Naive thymus-derived CD4-positive, alpha-beta T cell (primary cell): ENCODE measurements at regions of chr11 and their contacts with region 1.

Region 1: DNA sequence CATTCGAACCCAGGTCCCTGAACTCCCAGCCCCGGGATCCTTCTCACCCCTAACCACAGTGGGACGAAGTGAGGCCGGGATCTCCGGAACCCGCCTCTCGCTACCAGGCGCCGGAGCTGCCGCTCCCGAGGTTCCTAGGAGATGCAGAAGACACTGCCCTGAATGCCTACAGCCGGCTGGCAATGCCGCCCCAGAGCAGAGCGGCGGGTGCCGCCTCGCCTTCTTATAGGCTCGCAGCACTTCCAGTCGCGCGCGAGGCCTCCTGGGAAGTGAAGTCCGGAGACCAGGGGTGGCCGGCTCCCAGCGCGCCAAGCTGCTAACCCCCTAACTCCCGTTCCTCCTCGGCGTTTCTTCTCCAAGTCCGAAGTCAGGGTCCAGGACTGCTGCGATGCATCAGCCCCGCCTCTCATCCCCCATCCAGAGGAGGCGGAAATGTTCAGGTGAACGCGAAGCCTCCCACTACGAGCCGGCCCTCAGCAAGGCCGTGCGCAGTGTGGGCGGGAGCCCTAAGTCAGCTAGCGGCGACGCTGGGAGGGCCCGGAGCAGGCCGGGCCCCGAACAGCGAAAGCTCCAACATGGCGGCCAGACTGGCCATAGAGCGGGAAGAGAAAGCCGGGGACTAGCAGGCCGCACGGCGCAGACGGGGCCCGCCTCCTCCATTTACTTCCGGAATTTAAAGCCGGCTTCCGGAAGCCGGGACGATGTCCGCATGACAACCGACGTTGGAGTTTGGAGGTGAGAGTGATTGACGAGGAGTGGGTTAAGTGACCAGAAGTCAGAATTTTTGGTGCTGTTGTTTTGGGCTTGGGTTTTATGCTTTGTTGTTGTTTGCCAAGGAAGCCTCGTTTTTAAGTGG is at the starts of genes CYB561A3 and TMEM138:
- DNase-seq: peak; percentile 69 to 90 (median 81)
- ATAC-seq: peak; percentile 93
- H3K4me3 ChIP-seq: peak within 1 kb of the TSS; percentile 97
- H3K4me3 Mint-ChIP-seq: peak within 1 kb of the TSS; percentile 94 to 99 (median 98)
- H3K27ac ChIP-seq: peak within 1 kb of the TSS; percentile 95
- H3K27ac Mint-ChIP-seq: peak within 1 kb of the TSS; percentile 97 to 100 (median 99)
- H3K4me1 ChIP-seq: peaks cover 14 to 19% of the 10 kb centered on the region in 2 donors
- H3K4me1 Mint-ChIP-seq: peaks cover 30 to 55% (median 40%) of the 10 kb centered on the region in 7 donors
- H3K27me3 ChIP-seq: no peaks in the 10 kb centered on the region
- H3K27me3 Mint-ChIP-seq: no peaks in the 10 kb centered on the region
- total RNA-seq, gene CYB561A3: 37.9 to 47.6 (median 44.2) TPM
- total RNA-seq, gene TMEM138: 54.6 to 65.1 (median 59.9) TPM

Region 2: GRCh38 chr11:60906132-60906972 is 455.6 kb before region 1 on chr11 and contains the start of gene PRPF19:
- CTCF ChIA-PET with region 1: no interaction called
- POLR2A ChIA-PET with region 1: no interaction called
- intact Hi-C with region 1: loop called (anchors 2 to 10 kb)
- DNase-seq: peak; percentile 98 to 100 (median 99)
- ATAC-seq: peak; percentile 96
- H3K4me3 ChIP-seq: peak within 1 kb of the TSS; percentile 89
- H3K4me3 Mint-ChIP-seq: peak within 1 kb of the TSS; percentile 84 to 95 (median 91)
- H3K27ac ChIP-seq: peak within 1 kb of the TSS; percentile 88
- H3K27ac Mint-ChIP-seq: peak within 1 kb of the TSS; percentile 95 to 100 (median 98)
- H3K4me1 ChIP-seq: peaks cover 22 to 26% of the 10 kb centered on the region in 2 donors
- H3K4me1 Mint-ChIP-seq: peaks cover 34 to 69% (median 58%) of the 10 kb centered on the region in 7 donors
- H3K27me3 ChIP-seq: no peaks in the 10 kb centered on the region
- H3K27me3 Mint-ChIP-seq: peaks cover 0 to 11% (median 0%) of the 10 kb centered on the region in 5 donors
- total RNA-seq, gene PRPF19: 72.8 to 139 (median 85.6) TPM

Region 3: GRCh38 chr11:61021661-61022212 is 340.2 kb before region 1 on chr11:
- CTCF ChIA-PET with region 1: no interaction called
- POLR2A ChIA-PET with region 1: no interaction called
- intact Hi-C with region 1: no loop called
- DNase-seq: peak; percentile 72 to 98 (median 96)
- ATAC-seq: peak; percentile 91
- H3K4me3 ChIP-seq: peak overlapping the region; percentile 53
- H3K4me3 Mint-ChIP-seq: peak overlapping the region; percentile 68 to 90 (median 81)
- H3K27ac ChIP-seq: peak overlapping the region; percentile 82
- H3K27ac Mint-ChIP-seq: peak overlapping the region; percentile 88 to 100 (median 98)
- H3K4me1 ChIP-seq: peaks cover 49 to 56% of the 10 kb centered on the region in 2 donors
- H3K4me1 Mint-ChIP-seq: peaks cover 40 to 79% (median 76%) of the 10 kb centered on the region in 7 donors
- H3K27me3 ChIP-seq: no peaks in the 10 kb centered on the region
- H3K27me3 Mint-ChIP-seq: no peaks in the 10 kb centered on the region

Region 4: GRCh38 chr11:61327669-61328071 is 34.2 kb before region 1 on chr11:
- CTCF ChIA-PET with region 1: interaction called, 44 read pairs
- POLR2A ChIA-PET with region 1: interaction called, 82 read pairs
- intact Hi-C with region 1: no loop called
- DNase-seq: no peak
- ATAC-seq: no peak
- H3K4me3 ChIP-seq: no peak overlapping the region
- H3K4me3 Mint-ChIP-seq: no peak overlapping the region
- H3K27ac ChIP-seq: no peak overlapping the region
- H3K27ac Mint-ChIP-seq: no peak overlapping the region
- H3K4me1 ChIP-seq: peaks cover 14 to 15% of the 10 kb centered on the region in 2 donors
- H3K4me1 Mint-ChIP-seq: peaks cover 28 to 53% (median 47%) of the 10 kb centered on the region in 7 donors
- H3K27me3 ChIP-seq: no peaks in the 10 kb centered on the region
- H3K27me3 Mint-ChIP-seq: no peaks in the 10 kb centered on the region

Region 5: GRCh38 chr11:61384271-61385242 is 22.6 kb after region 1 on chr11:
- CTCF ChIA-PET with region 1: interaction called, 9 read pairs
- POLR2A ChIA-PET with region 1: interaction called, 39 read pairs
- intact Hi-C with region 1: loop called (anchors 1 kb)
- DNase-seq: no peak
- ATAC-seq: no peak
- H3K4me3 ChIP-seq: no peak overlapping the region
- H3K4me3 Mint-ChIP-seq: no peak overlapping the region
- H3K27ac ChIP-seq: no peak overlapping the region
- H3K27ac Mint-ChIP-seq: peak overlapping the region in 1 of 9 donors; percentile 30
- H3K4me1 ChIP-seq: no peaks in the 10 kb centered on the region
- H3K4me1 Mint-ChIP-seq: peaks cover 0 to 9% (median 7%) of the 10 kb centered on the region in 7 donors
- H3K27me3 ChIP-seq: no peaks in the 10 kb centered on the region
- H3K27me3 Mint-ChIP-seq: no peaks in the 10 kb centered on the region

Region 6: DNA sequence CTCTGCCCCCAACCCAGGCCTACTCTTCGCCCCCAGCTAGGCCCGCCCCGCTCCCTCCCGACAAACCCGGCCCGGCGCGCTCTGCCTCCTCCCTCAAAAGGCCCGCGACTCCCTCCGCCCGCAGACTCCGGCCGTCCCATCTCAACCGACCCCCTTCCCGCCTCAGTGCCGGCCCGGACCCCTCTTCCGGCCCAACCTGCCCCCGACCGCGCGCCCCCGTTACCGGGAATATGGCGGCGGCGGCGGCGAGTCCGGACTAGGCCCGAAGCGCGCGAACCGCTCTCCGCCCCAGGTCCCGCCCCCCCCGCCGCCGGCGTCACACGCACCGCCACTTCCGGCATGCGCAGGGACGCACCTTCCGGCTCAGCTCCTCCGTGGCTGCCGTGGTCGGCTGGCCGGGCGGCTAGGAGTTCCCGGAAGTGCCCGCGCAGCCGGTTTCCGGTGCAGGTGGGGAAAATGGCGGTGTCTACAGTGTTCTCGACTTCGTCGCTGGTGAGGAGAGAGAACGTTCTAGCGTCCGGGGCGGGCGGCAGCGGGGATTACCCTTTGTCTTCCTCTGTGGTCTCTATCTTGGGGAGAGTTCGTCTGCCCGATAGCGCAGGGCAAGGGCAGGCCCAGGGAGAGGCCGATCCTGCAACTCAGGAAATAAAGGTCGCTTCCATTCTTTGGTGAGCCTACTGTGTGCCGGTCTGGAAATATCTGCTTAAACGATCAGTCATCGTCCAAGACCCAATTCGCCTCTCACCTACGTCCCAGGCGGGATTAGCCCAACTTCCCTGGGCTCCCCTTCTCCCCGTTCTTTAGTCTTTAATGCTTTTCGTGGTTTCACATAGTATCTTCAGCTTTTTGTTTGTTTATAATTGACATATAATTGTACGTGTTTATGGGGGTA is 68.0 kb after region 1 on chr11 and contains the starts of genes CPSF7 and SDHAF2:
- CTCF ChIA-PET with region 1: no interaction called
- POLR2A ChIA-PET with region 1: interaction called, 6 read pairs
- intact Hi-C with region 1: loop called (anchors 1 kb)
- DNase-seq: peak; percentile 96 to 99 (median 97)
- ATAC-seq: peak; percentile 93
- H3K4me3 ChIP-seq: peak within 1 kb of the TSS; percentile 91
- H3K4me3 Mint-ChIP-seq: peak within 1 kb of the TSS; percentile 89 to 100 (median 97)
- H3K27ac ChIP-seq: peak within 1 kb of the TSS; percentile 98
- H3K27ac Mint-ChIP-seq: peak within 1 kb of the TSS; percentile 97 to 100 (median 99)
- H3K4me1 ChIP-seq: peaks cover 20 to 33% of the 10 kb centered on the region in 2 donors
- H3K4me1 Mint-ChIP-seq: peaks cover 31 to 86% (median 69%) of the 10 kb centered on the region in 7 donors
- H3K27me3 ChIP-seq: no peaks in the 10 kb centered on the region
- H3K27me3 Mint-ChIP-seq: peaks cover 0 to 2% (median 0%) of the 10 kb centered on the region in 5 donors
- total RNA-seq, gene CPSF7: 96.0 to 174 (median 113) TPM
- total RNA-seq, gene SDHAF2: 36.1 to 56.6 (median 48.2) TPM